GM12878 (cell line): ENCODE measurements at regions of chr22 and their contacts with region 1.

Region 1: GRCh38 chr22:31399211-31400028 is at the start of gene DRG1:
- DNase-seq: peak; percentile 85
- ATAC-seq: peak; percentile 99
- H3K4me3 ChIP-seq: peak within 1 kb of the TSS; percentile 95
- H3K27ac ChIP-seq: peak within 1 kb of the TSS; percentile 92
- H3K4me1 ChIP-seq: peaks cover 3% of the 10 kb centered on the region; the same call in 1 of the 2 replicates
- H3K27me3 ChIP-seq: no peaks in the 10 kb centered on the region
- CTCF ChIP-seq: no peak
- EP300 ChIP-seq: no peak
- POLR2A ChIP-seq: peak; percentile 99
- RAD21 ChIP-seq: no peak
- polyA plus RNA-seq, gene DRG1: 120 to 147 TPM

Region 2: GRCh38 chr22:31345331-31346254 is 53.8 kb before region 1 on chr22:
- CTCF ChIA-PET with region 1: interaction called, 4 read pairs
- POLR2A ChIA-PET with region 1: interaction called, 7 read pairs
- RAD21 ChIA-PET with region 1: no interaction called
- SMC1A ChIA-PET with region 1: no interaction called
- in situ Hi-C with region 1: loop called (anchors 5 kb)
- intact Hi-C with region 1: loop called (anchors 5 kb)
- DNase-seq: peak; percentile 39
- ATAC-seq: peak; percentile 35
- H3K4me3 ChIP-seq: peak overlapping the region; percentile 85
- H3K27ac ChIP-seq: peak overlapping the region; percentile 59
- H3K4me1 ChIP-seq: peaks cover 20% of the 10 kb centered on the region
- H3K27me3 ChIP-seq: no peaks in the 10 kb centered on the region
- CTCF ChIP-seq: peak; percentile 86 to 94 (median 86)
- EP300 ChIP-seq: no peak
- POLR2A ChIP-seq: peak; percentile 75
- RAD21 ChIP-seq: peak; percentile 73